ENCODE measurements at regions of chr19 and their contacts with region 1.

Region 1: DNA sequence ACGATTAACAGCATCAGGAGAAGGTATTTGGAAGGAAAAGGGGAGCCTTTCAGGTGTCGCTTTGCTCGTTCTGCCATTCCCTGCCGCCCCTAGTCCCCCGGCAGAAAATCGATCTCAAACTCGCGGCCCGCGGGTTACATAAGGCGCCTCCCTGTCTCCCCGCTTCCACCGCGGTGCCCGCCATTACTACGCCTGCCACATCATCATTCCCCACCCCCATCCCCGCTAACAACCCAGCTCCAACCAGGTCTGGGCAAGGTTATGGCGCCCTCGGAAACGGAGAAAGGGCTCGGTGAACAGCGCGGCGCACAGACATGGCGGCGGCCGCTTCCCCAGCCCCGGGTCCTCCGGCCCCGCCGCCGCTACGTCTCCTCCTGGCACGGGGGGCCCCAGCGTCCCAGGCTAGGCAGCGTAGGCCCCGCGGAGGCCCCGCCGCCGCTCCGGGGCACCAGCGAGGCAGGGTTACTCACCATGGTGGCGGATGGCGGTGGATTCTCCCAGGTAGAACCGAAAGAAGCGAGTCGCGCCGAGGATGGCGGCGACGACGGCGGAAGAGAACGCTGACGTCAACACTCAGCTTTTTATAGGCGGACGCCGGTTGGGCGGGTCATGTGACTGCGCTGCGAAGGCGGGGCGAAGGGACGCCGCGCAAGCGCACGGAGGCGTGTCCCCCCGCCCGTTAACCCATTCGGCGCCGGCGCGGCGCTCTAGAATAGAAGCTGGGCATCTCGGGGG is at the start of gene EEF2:
- DNase-seq: peak; percentile 96
- ATAC-seq: peak; percentile 74
- total RNA-seq, gene EEF2: 2,154 TPM

Region 2: DNA sequence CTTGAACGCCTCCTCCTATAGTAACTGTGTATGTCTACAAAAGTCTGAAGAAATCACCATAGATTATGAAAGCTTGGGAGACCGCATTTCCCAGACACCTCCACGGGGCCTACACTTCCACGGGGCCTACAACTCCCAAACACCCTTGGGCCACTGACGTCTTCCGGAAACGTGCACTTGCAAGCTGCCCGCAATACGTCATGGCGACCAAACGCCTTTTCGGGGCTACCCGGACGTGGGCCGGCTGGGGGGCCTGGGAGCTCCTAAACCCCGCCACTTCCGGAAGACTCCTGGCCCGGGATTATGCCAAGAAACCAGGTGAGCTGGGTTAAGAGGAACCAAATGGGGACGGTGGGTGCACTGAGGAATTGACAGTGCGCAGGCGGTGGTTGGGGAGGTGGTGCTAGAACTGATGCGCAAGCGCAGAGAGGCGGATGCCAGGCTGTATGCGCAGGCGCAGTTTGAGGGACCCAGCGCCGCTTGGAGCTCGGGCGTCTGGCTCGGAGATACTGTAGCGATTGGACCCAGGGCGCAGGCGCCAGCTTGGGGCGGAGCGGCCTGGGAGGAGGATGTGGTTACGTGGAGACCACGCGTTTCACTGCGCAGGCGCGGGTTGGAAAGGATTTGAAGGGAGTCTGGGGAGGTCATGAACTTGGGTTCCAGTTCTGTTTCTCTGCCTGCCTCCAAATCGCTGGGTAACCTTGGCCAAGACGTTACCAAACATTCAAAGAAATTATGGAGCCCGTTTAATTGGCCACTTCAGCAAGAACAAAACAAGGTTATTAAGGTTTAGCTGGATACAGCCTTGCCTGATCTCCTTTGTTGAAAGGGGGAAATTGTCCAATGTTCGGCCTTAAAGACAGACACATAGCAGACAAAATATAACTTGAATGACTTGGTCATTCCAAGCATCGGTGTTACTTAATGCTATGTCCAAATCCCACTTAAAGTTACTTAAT is 222.3 kb before region 1 on chr19 and contains the start of gene MRPL54:
- intact Hi-C with region 1: loop called (anchors 5 kb)
- DNase-seq: peak; percentile 100
- ATAC-seq: peak; percentile 97
- total RNA-seq, gene MRPL54: 73.8 TPM

Region 3: DNA sequence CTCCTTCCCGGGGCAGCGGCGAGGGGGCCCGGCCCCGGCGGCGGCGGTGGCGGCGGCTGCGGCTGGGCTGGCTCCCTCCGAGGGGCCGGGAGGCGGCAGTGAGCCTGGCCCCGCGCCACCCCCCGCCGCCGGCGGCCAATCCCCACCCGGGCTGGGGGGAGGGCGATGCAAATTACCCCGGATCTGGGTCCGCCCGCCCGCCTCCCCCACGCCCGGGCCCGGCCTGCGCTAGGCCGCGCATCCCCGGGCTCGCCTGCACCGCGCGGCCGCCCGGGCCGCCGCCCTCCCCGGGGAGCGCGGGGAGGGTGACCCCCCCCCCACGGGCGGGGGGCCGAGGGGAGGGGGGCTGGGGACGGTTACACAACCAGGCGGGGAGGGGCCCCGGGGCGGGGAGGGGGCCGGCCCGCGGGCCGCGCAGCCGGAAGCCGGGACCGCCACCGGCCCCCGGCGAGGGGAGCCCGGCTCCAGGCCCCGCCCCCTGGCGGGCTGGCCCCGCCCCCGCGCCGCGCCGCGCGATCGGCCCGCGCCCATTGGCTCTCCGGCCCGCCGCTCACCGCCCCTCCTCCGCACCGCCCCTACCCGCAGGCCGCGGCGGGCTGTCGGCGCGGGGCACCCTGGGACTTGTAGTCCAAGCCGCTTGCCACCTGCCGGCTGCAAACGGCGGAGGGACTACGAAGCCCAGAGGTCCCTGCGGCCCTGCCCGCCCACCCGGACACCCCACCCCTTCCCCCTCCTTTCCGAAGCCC is 80.5 kb after region 1 on chr19:
- intact Hi-C with region 1: loop called (anchors 2 kb)
- DNase-seq: peak; percentile 98
- ATAC-seq: peak; percentile 88

Region 4: DNA sequence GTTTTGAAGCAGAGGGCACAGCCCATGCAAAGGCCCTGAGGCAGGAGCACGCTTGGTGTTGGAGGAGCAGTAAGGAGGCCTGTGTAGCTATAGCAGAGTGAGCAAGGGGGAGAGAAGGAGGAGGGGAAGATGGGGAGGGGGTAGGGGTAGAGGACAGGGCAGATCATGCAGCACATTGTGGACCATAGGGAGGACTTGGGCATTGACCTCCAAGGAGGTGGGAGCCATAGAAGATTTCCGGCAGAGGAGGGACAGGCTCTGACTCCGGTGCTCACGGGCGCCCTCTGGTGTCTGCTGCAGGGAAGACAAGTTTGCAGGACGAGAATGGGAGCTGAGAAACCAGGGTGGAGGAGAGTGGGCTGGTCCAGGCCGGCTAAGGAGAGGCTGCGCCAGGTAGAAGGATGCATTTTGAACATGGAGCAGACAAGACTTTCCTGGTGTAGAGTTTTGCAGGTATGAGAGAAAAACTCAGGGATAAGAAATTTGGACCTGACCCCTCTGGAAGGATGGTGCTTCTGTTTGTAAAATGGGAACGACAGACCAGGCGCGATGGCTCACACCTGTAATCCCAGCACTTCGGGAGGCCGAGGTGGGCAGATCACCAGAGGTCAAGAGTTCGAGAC is 154.7 kb after region 1 on chr19:
- intact Hi-C with region 1: loop called (anchors 5 kb)
- DNase-seq: peak; percentile 88
- ATAC-seq: peak; percentile 82

Region 5: GRCh38 chr19:4208385-4209094 is 223.5 kb after region 1 on chr19:
- intact Hi-C with region 1: loop called (anchors 1 kb)
- DNase-seq: no peak
- ATAC-seq: no peak

Measured in Right ventricle myocardium inferior (tissue), 1 donor.